ENCODE measurements at regions of chr15 and their contacts with region 1.

Region 1: GRCh38 chr15:52780172-52780980 is 9.8 kb downstream of the ONECUT1 start:
- DNase-seq: peak; percentile 48
- ATAC-seq: no peak
- H3K4me3 ChIP-seq: peak overlapping the region in 1 of 2 experiments; percentile 11; a peak in 1 of 4 replicates
- H3K27ac ChIP-seq: no peak overlapping the region
- H3K4me1 ChIP-seq: peaks cover 13% of the 10 kb centered on the region
- H3K27me3 ChIP-seq: peaks cover 71% of the 10 kb centered on the region
- CTCF ChIP-seq: peak; percentile 95

Region 2: GRCh38 chr15:53197426-53197839 is 417.1 kb after region 1 on chr15:
- CTCF ChIA-PET with region 1: no interaction called
- POLR2A ChIA-PET with region 1: no interaction called
- in situ Hi-C with region 1: no loop called
- intact Hi-C with region 1: loop called (anchors 2 kb)
- DNase-seq: peak; percentile 13
- ATAC-seq: peak; percentile 86
- H3K4me3 ChIP-seq: no peak overlapping the region
- H3K27ac ChIP-seq: no peak overlapping the region
- H3K4me1 ChIP-seq: no peaks in the 10 kb centered on the region
- H3K27me3 ChIP-seq: peaks cover 5% of the 10 kb centered on the region; the same call in 1 of the 2 replicates
- CTCF ChIP-seq: peak; percentile 98

Region 3: GRCh38 chr15:53716909-53717876 is 936.8 kb after region 1 on chr15:
- CTCF ChIA-PET with region 1: no interaction called
- POLR2A ChIA-PET with region 1: no interaction called
- in situ Hi-C with region 1: no loop called
- intact Hi-C with region 1: loop called (anchors 5 kb)
- DNase-seq: no peak
- ATAC-seq: no peak
- H3K4me3 ChIP-seq: no peak overlapping the region
- H3K27ac ChIP-seq: no peak overlapping the region
- H3K4me1 ChIP-seq: no peaks in the 10 kb centered on the region
- H3K27me3 ChIP-seq: no peaks in the 10 kb centered on the region
- CTCF ChIP-seq: peak; percentile 32; the same call in 1 of the 2 replicates

Measured in Panc1 (cell line).